ENCODE measurements at regions of chr1 and their contacts with region 1.

Region 1: DNA sequence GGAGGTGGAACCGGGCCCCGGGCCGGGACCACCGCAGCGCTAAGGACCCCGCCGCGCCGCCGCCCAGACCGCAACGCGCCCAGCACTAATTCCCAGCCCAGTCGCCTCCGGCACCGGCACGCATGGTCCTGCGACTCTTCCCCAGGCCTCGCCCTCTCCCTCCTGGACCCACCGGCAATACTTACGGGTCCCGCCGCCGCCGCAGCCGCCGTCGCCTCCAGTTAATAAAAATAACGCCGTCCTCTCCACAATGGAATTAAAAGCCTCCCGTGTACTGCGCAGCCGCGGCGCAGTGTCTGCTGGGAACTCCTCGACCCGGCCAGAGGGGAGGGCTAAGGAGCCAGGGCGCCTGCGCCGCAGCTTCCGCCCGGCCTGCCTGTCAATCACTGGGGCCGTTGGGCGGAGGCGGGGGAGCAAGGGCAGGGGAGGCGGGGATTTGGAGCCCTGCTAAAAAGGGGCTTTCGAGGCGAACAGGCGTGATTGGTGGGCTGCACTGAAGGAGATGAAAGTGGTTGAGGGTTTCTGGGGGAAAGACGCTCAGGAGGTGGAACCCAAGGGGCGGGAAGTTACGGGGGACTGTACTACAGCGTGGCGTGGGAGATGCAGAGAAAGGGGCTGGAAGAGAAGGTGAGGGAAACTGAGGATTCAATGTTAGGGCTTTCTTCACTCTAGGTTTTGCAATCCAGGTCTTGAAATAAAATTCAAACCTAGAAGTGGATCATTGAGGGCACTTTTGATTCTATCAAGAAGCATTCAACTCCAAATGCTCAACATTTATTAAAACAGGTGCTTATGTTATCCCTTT is at the start of gene ZNF281:
- DNase-seq: peak; percentile 96
- H3K4me3 ChIP-seq: peak within 1 kb of the TSS; percentile 84 to 99 (median 94)
- H3K27ac ChIP-seq: peak within 1 kb of the TSS; percentile 89 to 95 (median 94)
- H3K4me1 ChIP-seq: peaks cover 0 to 48% (median 44%) of the 10 kb centered on the region in 4 donors
- H3K27me3 ChIP-seq: no peaks in the 10 kb centered on the region
- CTCF ChIP-seq: no peak
- EP300 ChIP-seq: peak in 1 of 4 donors; percentile 76
- POLR2A ChIP-seq: peak; percentile 52 to 87
- total RNA-seq, gene ZNF281: 13.2 to 16.4 (median 15.3) TPM

Region 2: DNA sequence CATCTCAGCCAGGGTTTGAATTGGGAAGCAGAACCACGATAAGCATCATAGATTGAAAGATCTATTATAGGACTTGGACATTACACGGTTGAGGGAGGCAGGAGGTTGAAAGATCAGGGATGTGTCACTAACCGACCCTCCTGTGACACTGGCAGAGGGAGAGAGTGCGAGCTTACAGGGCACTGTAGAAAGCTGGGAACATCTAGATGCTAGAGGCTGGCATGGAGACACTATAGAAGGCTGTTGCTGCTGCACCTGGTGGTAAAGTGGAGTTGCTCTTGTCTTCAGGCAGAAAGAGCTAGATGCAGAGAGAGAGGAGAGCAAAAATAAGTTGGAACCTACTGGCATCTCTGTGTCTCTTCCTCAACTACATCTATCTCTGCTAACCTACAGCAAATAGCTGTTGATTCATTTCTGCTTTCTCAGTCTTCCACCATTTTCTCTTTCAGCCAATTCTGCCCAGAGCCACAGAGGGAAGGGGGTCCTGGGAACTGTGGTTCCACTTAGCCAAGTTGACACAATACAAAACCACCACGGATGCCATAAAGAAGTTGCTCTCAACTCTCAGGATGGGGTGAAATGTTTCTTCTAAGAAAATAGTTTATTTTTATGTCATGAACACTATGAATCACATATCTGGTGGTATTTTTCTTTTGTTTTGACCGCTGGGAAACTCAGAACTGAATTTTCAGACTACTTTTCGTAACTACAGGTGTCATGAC is 156.0 kb before region 1 on chr1:
- intact Hi-C with region 1: no loop called
- DNase-seq: no peak
- H3K4me3 ChIP-seq: no peak overlapping the region
- H3K27ac ChIP-seq: no peak overlapping the region
- H3K4me1 ChIP-seq: no peaks in the 10 kb centered on the region
- H3K27me3 ChIP-seq: no peaks in the 10 kb centered on the region
- CTCF ChIP-seq: no peak
- EP300 ChIP-seq: no peak
- POLR2A ChIP-seq: no peak

Region 3: GRCh38 chr1:200351826-200352549 is 58.0 kb before region 1 on chr1:
- intact Hi-C with region 1: loop called (anchors 5 kb)
- DNase-seq: no peak
- H3K4me3 ChIP-seq: peak overlapping the region in 1 of 4 donors; percentile 4
- H3K27ac ChIP-seq: peak overlapping the region in 2 of 4 donors; percentile 60 to 66
- H3K4me1 ChIP-seq: peaks cover 0 to 12% (median 6%) of the 10 kb centered on the region in 4 donors
- H3K27me3 ChIP-seq: no peaks in the 10 kb centered on the region
- CTCF ChIP-seq: no peak
- EP300 ChIP-seq: no peak
- POLR2A ChIP-seq: no peak

Region 4: GRCh38 chr1:200367841-200368534 is 42.0 kb before region 1 on chr1:
- intact Hi-C with region 1: loop called (anchors 5 kb)
- DNase-seq: no peak
- H3K4me3 ChIP-seq: no peak overlapping the region
- H3K27ac ChIP-seq: peak overlapping the region in 2 of 4 donors; percentile 33 to 75
- H3K4me1 ChIP-seq: peaks cover 0 to 67% (median 37%) of the 10 kb centered on the region in 4 donors
- H3K27me3 ChIP-seq: no peaks in the 10 kb centered on the region
- CTCF ChIP-seq: no peak
- EP300 ChIP-seq: no peak
- POLR2A ChIP-seq: no peak

Region 5: GRCh38 chr1:201006450-201006849 is 596.5 kb after region 1 on chr1:
- intact Hi-C with region 1: no loop called
- DNase-seq: no peak
- H3K4me3 ChIP-seq: no peak overlapping the region
- H3K27ac ChIP-seq: no peak overlapping the region
- H3K4me1 ChIP-seq: no peaks in the 10 kb centered on the region
- H3K27me3 ChIP-seq: peaks cover 0 to under 1% (median under 1%) of the 10 kb centered on the region in 3 donors
- CTCF ChIP-seq: no peak
- EP300 ChIP-seq: no peak
- POLR2A ChIP-seq: no peak

Measured in sigmoid colon (tissue), 7 donors.